ENCODE measurements at regions of chr3 and their contacts with region 1.

Region 1: GRCh38 chr3:153161138-153161713 is 800 bp upstream of the RAP2B start:
- DNase-seq: peak; percentile 97 to 99
- H3K4me3 ChIP-seq: peak overlapping the region; percentile 97
- H3K27ac ChIP-seq: peak overlapping the region; percentile 93
- H3K4me1 ChIP-seq: peaks cover 42% of the 10 kb centered on the region
- H3K27me3 ChIP-seq: no peaks in the 10 kb centered on the region
- CTCF ChIP-seq: no peak

Region 2: GRCh38 chr3:152961323-152961722 is 199.9 kb before region 1 on chr3:
- CTCF ChIA-PET with region 1: no interaction called
- POLR2A ChIA-PET with region 1: no interaction called
- intact Hi-C with region 1: no loop called
- DNase-seq: peak in 1 of 2 experiments; percentile 56
- H3K4me3 ChIP-seq: no peak overlapping the region
- H3K27ac ChIP-seq: no peak overlapping the region
- H3K4me1 ChIP-seq: peaks cover 33% of the 10 kb centered on the region
- H3K27me3 ChIP-seq: no peaks in the 10 kb centered on the region
- CTCF ChIP-seq: peak; percentile 62

Region 3: DNA sequence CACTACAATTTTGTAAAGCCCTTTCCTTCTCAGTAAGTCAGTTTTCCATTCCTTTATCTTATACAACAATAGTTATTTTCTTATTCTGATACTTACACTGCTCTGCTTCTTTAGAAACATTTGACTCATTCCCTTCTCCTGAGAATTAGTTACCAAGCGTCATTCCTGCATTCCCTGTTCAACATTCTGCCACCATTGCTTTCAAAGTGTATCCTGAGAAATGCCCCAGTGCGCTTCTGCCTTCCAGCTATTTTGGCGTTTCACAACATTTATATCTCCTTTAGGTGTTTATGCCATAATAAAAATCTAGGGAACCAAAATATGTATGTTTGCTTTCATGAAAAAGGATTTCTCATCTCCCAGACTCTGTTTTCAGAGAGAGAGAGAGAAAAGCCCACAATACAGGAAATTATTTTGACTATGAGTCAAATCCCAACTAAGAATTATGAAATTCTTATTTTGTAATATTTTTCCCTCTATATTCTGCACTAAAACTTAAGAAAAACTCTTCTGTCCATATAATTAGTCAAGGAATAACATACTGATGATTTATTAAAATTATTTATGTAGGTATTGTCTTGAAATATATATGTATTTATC is 117.4 kb before region 1 on chr3:
- CTCF ChIA-PET with region 1: interaction called, 14 read pairs
- POLR2A ChIA-PET with region 1: interaction called, 48 read pairs
- intact Hi-C with region 1: loop called (anchors 1 kb)
- DNase-seq: peak; percentile 40 to 92
- H3K4me3 ChIP-seq: peak overlapping the region; percentile 54
- H3K27ac ChIP-seq: peak overlapping the region; percentile 94
- H3K4me1 ChIP-seq: peaks cover 37% of the 10 kb centered on the region
- H3K27me3 ChIP-seq: no peaks in the 10 kb centered on the region
- CTCF ChIP-seq: no peak

Region 4: GRCh38 chr3:153138276-153139210 is 22.7 kb before region 1 on chr3:
- CTCF ChIA-PET with region 1: interaction called, 15 read pairs
- POLR2A ChIA-PET with region 1: interaction called, 11 read pairs
- intact Hi-C with region 1: loop called (anchors 1 kb)
- DNase-seq: peak; percentile 89 to 100
- H3K4me3 ChIP-seq: no peak overlapping the region
- H3K27ac ChIP-seq: peak overlapping the region; percentile 98
- H3K4me1 ChIP-seq: peaks cover 43% of the 10 kb centered on the region
- H3K27me3 ChIP-seq: no peaks in the 10 kb centered on the region
- CTCF ChIP-seq: no peak

Region 5: GRCh38 chr3:153291056-153291685 is 129.9 kb after region 1 on chr3:
- CTCF ChIA-PET with region 1: interaction called, 3 read pairs
- POLR2A ChIA-PET with region 1: no interaction called
- intact Hi-C with region 1: loop called (anchors 1 kb)
- DNase-seq: no peak
- H3K4me3 ChIP-seq: no peak overlapping the region
- H3K27ac ChIP-seq: no peak overlapping the region
- H3K4me1 ChIP-seq: no peaks in the 10 kb centered on the region
- H3K27me3 ChIP-seq: no peaks in the 10 kb centered on the region
- CTCF ChIP-seq: peak; percentile 38; the same call in 1 of the 2 replicates

Region 6: DNA sequence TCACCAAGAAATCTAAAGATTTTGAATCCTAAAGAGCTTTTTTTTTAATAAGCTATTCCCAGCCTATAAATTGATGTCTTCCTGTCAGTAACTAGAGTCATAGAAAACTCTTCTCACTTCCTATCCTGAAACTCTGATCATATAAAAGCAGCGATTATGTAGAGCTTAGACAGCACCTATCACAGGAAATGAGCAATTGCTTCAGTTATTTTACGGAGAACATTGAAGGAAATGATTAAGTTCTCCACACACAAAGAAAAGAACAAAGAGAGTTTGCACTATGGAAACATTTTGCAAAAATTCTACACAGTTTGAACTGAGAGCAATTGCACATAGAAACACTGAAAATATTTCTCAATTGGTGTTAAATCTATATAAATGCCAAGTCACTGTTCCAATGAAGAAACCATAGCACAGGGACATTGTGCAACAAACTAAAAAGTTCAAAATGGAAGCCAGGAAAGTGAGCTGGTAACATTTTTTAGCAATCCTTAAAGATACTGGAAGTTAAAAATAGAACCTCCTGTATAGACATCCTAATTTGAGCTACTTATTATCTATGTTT is 668.5 kb after region 1 on chr3:
- CTCF ChIA-PET with region 1: no interaction called
- POLR2A ChIA-PET with region 1: no interaction called
- intact Hi-C with region 1: loop called (anchors 5 kb)
- DNase-seq: no peak
- H3K4me3 ChIP-seq: no peak overlapping the region
- H3K27ac ChIP-seq: no peak overlapping the region; the same call in 1 of the 2 replicates
- H3K4me1 ChIP-seq: 0 out of 2 replicates have a peak, but pooled peaks cover 9% of the 10 kb centered on the region
- H3K27me3 ChIP-seq: no peaks in the 10 kb centered on the region
- CTCF ChIP-seq: no peak